ENCODE measurements at regions of chr1 and their contacts with region 1.

Region 1: GRCh38 chr1:9593492-9594465 is 5.1 kb downstream of the TMEM201 start:
- H3K4me3 Mint-ChIP-seq: peak overlapping the region; percentile 46
- H3K27ac Mint-ChIP-seq: peak overlapping the region; percentile 31
- H3K4me1 Mint-ChIP-seq: peaks cover 53% of the 10 kb centered on the region
- H3K27me3 Mint-ChIP-seq: peaks cover 4% of the 10 kb centered on the region

Region 2: DNA sequence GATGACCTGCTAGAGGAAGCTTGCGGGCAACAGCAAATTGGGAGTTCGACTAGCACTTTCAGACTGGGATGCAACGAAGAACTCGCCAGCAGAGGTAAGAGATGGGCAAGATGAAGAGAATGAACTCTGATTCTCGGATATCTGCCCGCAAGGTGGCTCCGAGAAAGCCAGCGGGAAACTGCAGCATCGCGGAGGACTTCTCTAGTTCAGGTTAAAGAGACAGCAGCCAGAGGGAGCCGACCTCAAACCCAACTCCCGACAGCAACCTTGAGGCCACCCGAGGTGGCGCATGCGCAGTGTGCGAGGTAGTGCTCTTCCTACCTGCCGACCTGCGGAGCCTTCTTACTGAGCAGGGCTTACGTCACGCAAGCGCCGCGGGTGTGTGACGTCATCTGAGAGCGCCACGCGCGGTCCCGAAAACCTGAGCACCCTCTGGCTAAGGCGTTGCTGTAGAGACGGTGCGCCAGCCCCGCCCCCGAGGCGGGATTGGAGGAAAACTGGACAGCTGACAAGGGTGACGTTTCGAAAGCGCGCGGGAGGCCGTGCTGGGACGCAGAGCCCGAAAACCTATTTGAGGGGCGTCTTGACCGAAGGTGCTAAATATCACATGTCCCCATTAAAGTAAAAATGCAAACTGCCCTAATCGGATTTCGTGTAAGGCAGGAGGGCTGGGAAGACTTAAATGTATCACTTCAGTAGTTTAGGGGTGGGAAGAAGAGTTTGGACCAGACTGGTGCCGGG is 165.0 kb before region 1 on chr1:
- intact Hi-C with region 1: loop called (anchors 5 kb)
- H3K4me3 Mint-ChIP-seq: peak overlapping the region; percentile 87
- H3K27ac Mint-ChIP-seq: peak overlapping the region; percentile 85
- H3K4me1 Mint-ChIP-seq: peaks cover 42% of the 10 kb centered on the region
- H3K27me3 Mint-ChIP-seq: peaks cover 26% of the 10 kb centered on the region

Region 3: DNA sequence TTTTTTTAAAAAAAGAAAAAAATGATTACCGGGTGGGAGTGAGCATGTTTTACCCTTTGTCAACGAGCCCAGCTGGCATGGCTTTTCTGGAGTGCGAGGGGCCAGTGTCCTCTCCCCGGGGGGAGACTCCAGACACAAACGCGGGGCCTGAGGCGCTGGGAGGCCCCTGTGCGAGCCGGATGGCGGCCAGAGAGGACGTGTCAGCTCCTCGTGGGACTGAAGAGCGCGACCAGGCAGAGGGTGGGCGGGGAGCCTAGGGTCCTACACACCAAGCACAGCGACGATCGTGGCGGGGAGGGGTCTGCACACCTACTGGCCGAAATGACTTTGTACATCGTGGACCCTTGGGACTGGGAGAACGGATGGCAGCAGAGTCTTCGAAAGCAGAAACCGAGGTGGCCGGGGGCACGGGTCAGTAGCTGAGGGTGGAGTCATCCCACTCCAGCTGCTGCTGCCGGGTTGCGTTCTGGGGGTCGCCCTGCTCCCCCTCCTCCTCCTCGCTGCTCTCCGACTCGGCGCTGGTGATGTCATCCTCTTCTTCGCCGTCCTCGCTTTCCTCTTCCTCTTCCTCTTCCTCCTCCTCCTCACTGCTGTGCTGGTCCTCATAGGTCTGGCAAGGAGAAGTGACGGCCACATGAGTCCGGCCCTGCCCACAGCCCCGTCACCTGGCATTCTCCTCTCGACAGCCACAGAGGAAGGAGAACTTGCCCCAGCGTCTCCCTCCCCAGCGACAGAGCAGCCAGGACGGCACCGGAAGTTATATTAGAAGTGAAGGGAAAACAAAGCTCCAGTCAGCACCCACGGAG is 136.5 kb after region 1 on chr1:
- intact Hi-C with region 1: no loop called
- H3K4me3 Mint-ChIP-seq: no peak overlapping the region
- H3K27ac Mint-ChIP-seq: peak overlapping the region; percentile 65
- H3K4me1 Mint-ChIP-seq: peaks cover 37% of the 10 kb centered on the region
- H3K27me3 Mint-ChIP-seq: no peaks in the 10 kb centered on the region